Activated naive CD4-positive, alpha-beta T cell treated with anti-CD3 and anti-CD28 coated beads for 36 hours (primary cell): ENCODE measurements at regions of chr21 and their contacts with region 1.

Region 1: DNA sequence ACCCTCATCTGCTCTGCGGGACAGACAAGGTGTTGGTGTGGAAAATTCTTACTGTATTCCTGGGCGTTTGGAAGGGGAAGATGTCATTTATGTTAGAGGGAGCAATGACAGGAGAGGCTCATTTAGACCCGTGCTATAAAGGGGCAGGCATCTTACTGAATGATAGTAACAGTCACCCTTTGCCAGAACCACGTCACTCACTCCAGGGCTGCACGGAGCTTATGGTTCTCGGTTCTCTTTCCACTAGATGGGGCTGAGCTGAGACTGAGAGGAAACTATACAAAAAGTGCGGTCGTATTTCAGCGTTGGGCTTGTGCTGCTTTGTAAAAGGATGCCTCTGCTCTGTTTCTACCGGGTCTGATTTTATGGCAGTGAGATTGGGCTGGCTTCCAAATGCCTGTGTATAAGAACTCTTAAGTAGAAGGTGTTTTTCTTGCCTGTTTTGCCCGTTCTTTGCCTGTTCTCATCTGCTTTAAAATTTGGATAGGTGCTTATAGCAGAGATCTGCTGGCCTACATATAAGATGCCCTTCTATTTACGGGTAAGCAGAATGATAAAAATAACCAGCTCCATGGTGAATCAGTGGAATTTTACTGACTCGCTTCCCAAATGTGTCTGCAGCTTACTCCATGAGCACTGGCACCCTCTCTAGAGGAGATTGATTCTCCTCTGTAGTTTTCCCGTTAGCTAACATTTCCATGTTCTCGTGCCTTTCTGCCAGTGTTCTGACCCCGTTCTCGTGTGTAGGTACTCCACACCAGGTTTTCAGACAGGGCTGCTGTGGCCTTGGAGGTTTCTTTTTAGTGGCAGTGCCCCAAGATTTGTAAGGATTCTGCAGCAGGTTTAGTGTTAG is 55.9 kb downstream of the MRPS6 start:
- DNase-seq: peak; percentile 90
- H3K4me3 Mint-ChIP-seq: peak overlapping the region; percentile 60
- H3K27ac Mint-ChIP-seq: peak overlapping the region; percentile 92
- H3K4me1 Mint-ChIP-seq: peaks cover 83% of the 10 kb centered on the region
- H3K27me3 Mint-ChIP-seq: no peaks in the 10 kb centered on the region

Region 2: GRCh38 chr21:33641336-33642026 is 487.8 kb before region 1 on chr21 and contains the start of gene CRYZL1:
- CTCF ChIA-PET with region 1: no interaction called
- intact Hi-C with region 1: loop called (anchors 5 kb)
- DNase-seq: peak; percentile 100
- H3K4me3 Mint-ChIP-seq: peak within 1 kb of the TSS; percentile 91
- H3K27ac Mint-ChIP-seq: peak within 1 kb of the TSS; percentile 94
- H3K4me1 Mint-ChIP-seq: peaks cover 21% of the 10 kb centered on the region
- H3K27me3 Mint-ChIP-seq: peaks cover 17% of the 10 kb centered on the region
- total RNA-seq, gene CRYZL1: 30.3 to 32.7 TPM

Region 3: GRCh38 chr21:33931799-33932390 is 197.4 kb before region 1 on chr21:
- CTCF ChIA-PET with region 1: interaction called, 3 read pairs
- intact Hi-C with region 1: loop called (anchors 5 kb)
- DNase-seq: no peak
- H3K4me3 Mint-ChIP-seq: peak overlapping the region; percentile 93
- H3K27ac Mint-ChIP-seq: peak overlapping the region; percentile 99
- H3K4me1 Mint-ChIP-seq: peaks cover 43% of the 10 kb centered on the region
- H3K27me3 Mint-ChIP-seq: no peaks in the 10 kb centered on the region

Region 4: GRCh38 chr21:34020005-34020847 is 109.0 kb before region 1 on chr21:
- CTCF ChIA-PET with region 1: no interaction called
- intact Hi-C with region 1: loop called (anchors 5 kb)
- DNase-seq: no peak
- H3K4me3 Mint-ChIP-seq: no peak overlapping the region
- H3K27ac Mint-ChIP-seq: no peak overlapping the region
- H3K4me1 Mint-ChIP-seq: peaks cover 14% of the 10 kb centered on the region
- H3K27me3 Mint-ChIP-seq: no peaks in the 10 kb centered on the region

Region 5: DNA sequence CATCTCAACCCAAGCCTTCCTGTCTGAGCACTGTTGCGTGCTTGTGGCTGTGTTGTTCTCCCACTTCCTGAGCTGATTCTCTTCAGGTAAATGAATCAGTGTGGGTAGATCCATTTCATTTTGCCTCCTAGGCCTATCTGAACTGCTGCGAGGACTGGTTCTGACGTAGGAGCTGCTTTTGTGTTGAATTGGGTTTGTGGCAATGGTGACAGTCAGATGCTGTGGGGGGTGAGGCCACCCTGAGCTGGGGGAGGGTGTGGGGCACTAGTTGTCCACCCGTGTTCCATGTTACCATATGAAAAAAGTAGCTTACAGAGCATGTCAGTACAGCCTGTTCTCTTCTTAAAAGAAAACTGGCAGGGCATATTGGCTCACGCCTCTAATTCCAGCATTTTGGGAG is 25.6 kb after region 1 on chr21:
- CTCF ChIA-PET with region 1: interaction called, 4 read pairs
- intact Hi-C with region 1: loop called (anchors 2 kb)
- DNase-seq: peak; percentile 54
- H3K4me3 Mint-ChIP-seq: no peak overlapping the region
- H3K27ac Mint-ChIP-seq: peak overlapping the region; percentile 76
- H3K4me1 Mint-ChIP-seq: peaks cover 23% of the 10 kb centered on the region
- H3K27me3 Mint-ChIP-seq: no peaks in the 10 kb centered on the region

Region 6: DNA sequence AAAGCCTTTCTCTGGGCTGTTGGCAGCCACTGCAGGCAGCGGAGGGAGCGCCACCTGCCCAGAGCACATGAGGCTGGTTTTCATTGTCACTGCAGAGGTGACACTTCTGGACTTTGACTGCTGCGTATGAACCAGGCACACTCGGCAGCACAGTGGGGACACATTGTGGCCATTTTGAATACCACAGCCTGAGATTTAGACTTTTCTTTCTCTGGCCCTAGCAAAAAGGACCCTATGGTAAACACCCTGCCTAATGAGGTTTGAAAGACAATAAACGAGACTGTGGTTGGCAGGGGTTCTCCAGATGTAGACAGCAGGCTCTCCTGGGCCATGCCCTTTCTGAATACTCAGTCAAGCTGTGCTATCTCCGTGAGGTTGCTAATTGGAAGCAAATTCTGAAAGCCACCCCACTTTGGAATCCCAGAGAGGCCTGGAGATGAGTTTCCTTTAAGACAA is 222.5 kb after region 1 on chr21:
- CTCF ChIA-PET with region 1: interaction called, 6 read pairs
- intact Hi-C with region 1: loop called (anchors 1 kb)
- DNase-seq: peak; percentile 45
- H3K4me3 Mint-ChIP-seq: no peak overlapping the region
- H3K27ac Mint-ChIP-seq: no peak overlapping the region
- H3K4me1 Mint-ChIP-seq: peaks cover 3% of the 10 kb centered on the region
- H3K27me3 Mint-ChIP-seq: peaks cover 3% of the 10 kb centered on the region